ENCODE measurements at regions of chr3 and their contacts with region 1.

Region 1: DNA sequence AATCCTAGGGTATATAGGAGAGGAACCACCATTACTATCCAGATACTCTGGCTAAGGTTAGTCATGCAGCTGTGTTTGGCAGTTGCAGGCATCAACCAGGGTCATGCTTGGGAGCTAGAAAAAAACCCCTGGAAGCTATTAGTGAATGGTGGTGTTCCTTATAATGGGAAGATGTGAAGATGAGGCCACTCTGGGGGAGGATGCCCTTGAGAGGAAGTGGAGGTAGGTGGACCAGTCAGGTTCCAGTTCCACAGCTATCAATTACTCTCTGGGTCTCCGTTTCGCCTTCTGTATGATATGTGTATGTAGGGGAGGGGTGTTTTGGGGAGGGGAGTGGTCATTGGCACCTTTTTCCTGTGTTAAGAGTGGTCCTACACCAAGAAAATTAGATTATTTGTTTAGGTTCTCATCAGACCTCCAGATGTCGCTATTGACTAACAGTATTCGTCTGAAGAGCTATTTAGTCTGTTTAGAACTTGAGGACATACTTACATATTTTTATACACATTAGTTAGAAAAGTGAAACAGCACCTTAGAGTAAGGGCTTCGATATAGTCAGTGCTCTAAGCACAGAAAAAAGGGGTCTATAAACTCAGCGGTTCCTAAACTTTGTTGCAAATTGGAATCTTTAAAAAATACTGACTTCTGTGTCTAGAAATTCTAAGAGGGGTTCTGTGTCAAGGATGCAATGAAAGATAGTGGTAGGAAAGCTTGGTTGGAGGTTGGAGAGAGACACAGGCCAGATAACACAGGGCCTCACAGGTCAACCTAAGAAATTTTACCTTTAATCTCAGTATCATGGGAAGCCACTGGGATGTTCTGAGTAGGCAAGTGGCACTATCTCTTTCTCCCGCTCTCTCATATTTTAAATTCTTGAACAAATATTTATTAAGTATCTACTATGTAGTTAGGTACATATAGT is 9.1 kb upstream of the HPS3 start:
- DNase-seq: peak; percentile 35
- H3K4me3 ChIP-seq: no peak overlapping the region
- H3K27ac ChIP-seq: no peak overlapping the region
- H3K4me1 ChIP-seq: no peaks in the 10 kb centered on the region
- H3K27me3 ChIP-seq: no peaks in the 10 kb centered on the region
- CTCF ChIP-seq: peak; percentile 51 to 57

Region 2: GRCh38 chr3:149203758-149204157 is 83.4 kb after region 1 on chr3:
- CTCF ChIA-PET with region 1: no interaction called
- dilution Hi-C with region 1: no loop called
- in situ Hi-C with region 1: no loop called
- intact Hi-C with region 1: no loop called
- DNase-seq: no peak
- H3K4me3 ChIP-seq: no peak overlapping the region
- H3K27ac ChIP-seq: no peak overlapping the region
- H3K4me1 ChIP-seq: no peaks in the 10 kb centered on the region
- H3K27me3 ChIP-seq: no peaks in the 10 kb centered on the region
- CTCF ChIP-seq: no peak

Region 3: DNA sequence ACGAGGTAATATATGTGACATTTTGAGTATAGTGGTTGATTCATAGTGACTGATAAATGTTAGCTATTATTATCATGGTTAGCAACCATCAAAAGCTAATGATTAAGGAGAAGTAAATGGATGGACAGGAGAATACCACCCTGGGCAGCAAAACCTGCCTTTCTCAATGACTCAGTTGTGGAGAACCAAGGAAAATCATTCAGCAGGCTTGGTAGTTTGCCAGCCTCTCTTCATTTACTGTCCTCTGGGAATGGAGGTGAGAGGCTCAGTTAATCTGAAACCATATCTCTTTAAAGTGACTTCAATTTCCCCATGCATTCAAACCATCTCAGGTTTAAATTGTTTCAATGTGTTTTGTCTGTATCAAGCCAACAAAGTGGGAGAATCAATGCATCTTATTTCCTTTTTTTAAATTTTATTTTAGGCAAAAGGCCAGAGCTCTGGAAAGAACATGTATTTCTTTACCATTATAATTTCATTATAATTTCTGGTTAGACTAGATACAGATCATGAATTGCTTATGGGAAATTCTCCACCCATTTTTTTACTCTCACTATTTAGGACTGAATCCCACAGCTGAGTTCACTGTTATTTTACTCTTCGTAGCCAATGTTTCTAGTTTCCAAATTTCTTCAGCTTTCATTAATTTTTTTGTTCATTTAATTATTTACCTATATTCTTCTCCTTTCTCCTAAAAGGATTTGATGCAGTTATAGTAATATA is 210.5 kb after region 1 on chr3:
- CTCF ChIA-PET with region 1: no interaction called
- dilution Hi-C with region 1: no loop called
- in situ Hi-C with region 1: no loop called
- intact Hi-C with region 1: loop called (anchors 1 kb)
- DNase-seq: peak; percentile 70
- H3K4me3 ChIP-seq: no peak overlapping the region
- H3K27ac ChIP-seq: no peak overlapping the region
- H3K4me1 ChIP-seq: peaks cover 6% of the 10 kb centered on the region
- H3K27me3 ChIP-seq: no peaks in the 10 kb centered on the region
- CTCF ChIP-seq: no peak

Region 4: DNA sequence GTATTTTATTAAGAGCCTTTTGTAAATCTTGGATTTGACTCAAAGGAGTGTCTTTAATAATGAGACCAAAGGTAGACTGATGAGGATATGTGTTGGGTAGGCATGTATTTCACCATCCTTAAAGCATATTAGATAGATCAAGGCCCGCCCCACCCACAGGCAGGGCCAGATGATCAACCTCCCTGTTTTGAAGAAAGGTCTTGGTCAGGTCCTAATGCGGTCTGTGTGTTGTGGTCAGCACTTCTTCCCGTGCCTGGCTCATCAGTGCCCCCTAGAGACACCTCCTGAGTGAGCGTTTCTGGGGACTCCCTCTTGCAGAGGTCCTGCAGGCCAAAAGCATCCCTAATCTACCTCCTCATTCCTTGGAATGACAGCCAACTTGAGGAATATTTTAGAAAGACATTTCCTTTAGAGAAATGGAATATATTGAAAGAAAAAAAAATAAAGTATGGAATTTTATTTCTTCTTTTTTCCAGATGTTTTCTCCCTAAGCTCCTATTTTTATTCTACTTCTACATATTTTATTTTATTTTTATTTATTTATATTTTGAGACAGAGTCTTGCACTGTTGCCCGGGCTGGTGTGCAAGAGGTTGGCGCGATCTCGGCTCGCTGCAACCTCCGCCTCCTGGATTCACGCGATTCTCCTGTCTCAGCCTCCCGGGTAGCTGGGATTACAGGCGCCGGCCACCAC is 360.2 kb after region 1 on chr3:
- CTCF ChIA-PET with region 1: no interaction called
- dilution Hi-C with region 1: no loop called
- in situ Hi-C with region 1: loop called (anchors 25 kb)
- intact Hi-C with region 1: loop called (anchors 5 kb)
- DNase-seq: peak; percentile 73
- H3K4me3 ChIP-seq: no peak overlapping the region
- H3K27ac ChIP-seq: no peak overlapping the region
- H3K4me1 ChIP-seq: peaks cover 3% of the 10 kb centered on the region
- H3K27me3 ChIP-seq: no peaks in the 10 kb centered on the region
- CTCF ChIP-seq: peak; percentile 94 to 99